Transverse colon (tissue), 4 donors: ENCODE measurements at regions of chr18 and their contacts with region 1.

Region 1: GRCh38 chr18:5868218-5869115 is 26.9 kb downstream of the TMEM200C start:
- DNase-seq: peak; percentile 63
- H3K4me3 ChIP-seq: no peak overlapping the region
- H3K27ac ChIP-seq: no peak overlapping the region
- H3K4me1 ChIP-seq: no peaks in the 10 kb centered on the region
- H3K27me3 ChIP-seq: no peaks in the 10 kb centered on the region
- CTCF ChIP-seq: peak; percentile 65 to 69 (median 66)
- EP300 ChIP-seq: no peak
- POLR2A ChIP-seq: no peak

Region 2: GRCh38 chr18:5057386-5058348 is 810.8 kb before region 1 on chr18:
- in situ Hi-C with region 1: loop called in 1 of 4 experiments (anchors 25 kb)
- intact Hi-C with region 1: no loop called
- DNase-seq: peak; percentile 52
- H3K4me3 ChIP-seq: no peak overlapping the region
- H3K27ac ChIP-seq: no peak overlapping the region
- H3K4me1 ChIP-seq: no peaks in the 10 kb centered on the region
- H3K27me3 ChIP-seq: no peaks in the 10 kb centered on the region
- CTCF ChIP-seq: peak; percentile 58 to 77 (median 70)
- EP300 ChIP-seq: no peak
- POLR2A ChIP-seq: no peak

Region 3: DNA sequence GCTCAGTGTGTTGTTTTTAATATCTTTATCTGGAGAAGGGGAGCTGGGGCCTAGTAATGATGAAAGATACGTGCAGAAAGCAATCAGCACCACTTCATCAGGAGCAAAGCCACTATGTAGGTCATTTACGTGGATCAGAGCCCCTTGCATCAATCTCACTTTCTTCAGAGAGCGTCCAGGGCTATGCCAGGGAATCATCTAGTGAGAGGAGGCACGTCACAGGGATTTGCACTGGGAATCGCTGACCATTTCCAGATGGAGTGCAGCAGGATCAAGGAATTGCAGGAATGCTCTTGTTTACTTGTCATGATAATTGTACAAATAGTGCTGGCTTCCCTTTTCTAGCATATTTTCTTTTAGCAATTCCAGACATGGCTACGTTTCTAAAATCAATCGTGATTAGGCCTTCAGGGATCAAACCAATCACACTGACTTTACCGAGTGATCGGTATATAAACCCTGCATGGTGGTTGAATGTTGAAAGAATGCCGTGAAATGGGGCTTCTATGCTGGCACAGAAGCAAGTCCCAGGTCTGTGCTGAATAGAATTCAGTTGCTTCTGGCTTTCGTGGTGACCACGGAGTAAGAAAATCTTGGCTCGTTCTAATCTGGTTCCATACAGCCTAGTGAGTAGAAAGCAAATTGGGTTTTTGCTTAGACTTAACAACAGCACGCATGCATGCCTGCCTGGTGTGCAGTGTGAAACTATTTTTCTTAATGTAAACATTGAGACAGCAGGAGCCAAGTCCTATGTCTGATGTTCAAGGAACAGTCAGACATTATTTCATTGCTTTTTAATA is 96.0 kb before region 1 on chr18:
- in situ Hi-C with region 1: loop called in 1 of 4 experiments (anchors 25 kb)
- intact Hi-C with region 1: no loop called
- DNase-seq: no peak
- H3K4me3 ChIP-seq: no peak overlapping the region
- H3K27ac ChIP-seq: no peak overlapping the region
- H3K4me1 ChIP-seq: no peaks in the 10 kb centered on the region
- H3K27me3 ChIP-seq: no peaks in the 10 kb centered on the region
- CTCF ChIP-seq: no peak
- EP300 ChIP-seq: no peak
- POLR2A ChIP-seq: no peak

Region 4: DNA sequence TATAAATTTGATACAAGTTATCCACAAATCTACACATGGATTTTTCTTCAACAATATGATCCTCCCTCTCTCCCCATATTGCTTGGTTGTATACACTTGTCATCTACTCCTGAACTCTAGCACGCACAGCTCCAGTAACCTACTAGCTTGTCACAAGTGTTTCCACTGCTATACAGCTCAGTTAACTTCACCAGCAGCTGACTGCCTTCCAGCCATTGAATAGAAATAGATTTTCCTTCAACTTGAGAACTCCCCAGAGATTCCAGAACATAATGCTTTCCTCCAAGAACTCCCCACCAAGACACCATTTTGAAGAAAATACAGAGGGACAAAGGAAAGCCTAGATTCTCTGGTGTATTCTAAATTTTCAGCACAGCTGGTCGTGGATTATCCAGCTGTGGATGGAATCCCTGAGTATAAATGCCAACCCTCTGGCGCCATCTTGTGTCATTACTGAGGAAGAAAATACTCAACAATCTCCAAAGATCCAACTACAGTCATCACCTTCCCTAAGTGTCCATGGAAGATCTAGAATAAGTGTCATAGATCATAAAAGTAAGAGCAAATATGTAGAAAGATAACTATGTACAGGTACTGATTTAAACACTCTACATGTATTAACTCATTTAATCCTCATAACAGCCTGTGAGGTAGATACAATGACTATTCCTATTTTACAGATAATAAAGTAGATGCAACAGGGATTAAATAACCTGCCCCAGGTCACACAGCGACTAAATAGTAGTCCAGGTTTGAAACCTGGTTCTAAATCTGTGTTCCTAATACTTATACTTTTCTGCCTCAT is 1017.7 kb after region 1 on chr18:
- in situ Hi-C with region 1: loop called in 1 of 4 experiments (anchors 25 kb)
- intact Hi-C with region 1: loop called (anchors 10 kb)
- DNase-seq: peak; percentile 14
- H3K4me3 ChIP-seq: no peak overlapping the region
- H3K27ac ChIP-seq: no peak overlapping the region
- H3K4me1 ChIP-seq: peaks cover 0 to 4% (median 0%) of the 10 kb centered on the region in 4 donors
- H3K27me3 ChIP-seq: no peaks in the 10 kb centered on the region
- CTCF ChIP-seq: peak; percentile 51 to 61 (median 57)
- EP300 ChIP-seq: no peak
- POLR2A ChIP-seq: no peak